H1 (cell line): ENCODE measurements at regions of chr12 and their contacts with region 1.

Region 1: GRCh38 chr12:106223485-106224354 is 24.1 kb downstream of the CKAP4 start:
- DNase-seq: peak in 1 of 2 experiments; percentile 92
- H3K4me3 ChIP-seq: no peak overlapping the region
- H3K27ac ChIP-seq: no peak overlapping the region
- H3K4me1 ChIP-seq: peaks cover 0 to 2% (median 0%) of the 10 kb centered on the region in 4 experiments; a peak in 1 of 7 replicates
- H3K27me3 ChIP-seq: no peaks in the 10 kb centered on the region
- CTCF ChIP-seq: peak; percentile 89 to 93 (median 91)
- EP300 ChIP-seq: no peak
- POLR2A ChIP-seq: no peak
- RAD21 ChIP-seq: peak; percentile 90 to 91

Region 2: GRCh38 chr12:105420659-105421240 is 803.0 kb before region 1 on chr12:
- CTCF ChIA-PET with region 1: interaction called, 11 read pairs
- POLR2A ChIA-PET with region 1: no interaction called
- DNase-seq: peak in 1 of 2 experiments; percentile 83
- H3K4me3 ChIP-seq: no peak overlapping the region
- H3K27ac ChIP-seq: no peak overlapping the region
- H3K4me1 ChIP-seq: no peaks in the 10 kb centered on the region
- H3K27me3 ChIP-seq: no peaks in the 10 kb centered on the region
- CTCF ChIP-seq: peak; percentile 51 to 90 (median 82)
- EP300 ChIP-seq: no peak
- POLR2A ChIP-seq: no peak
- RAD21 ChIP-seq: peak; percentile 100

Region 3: DNA sequence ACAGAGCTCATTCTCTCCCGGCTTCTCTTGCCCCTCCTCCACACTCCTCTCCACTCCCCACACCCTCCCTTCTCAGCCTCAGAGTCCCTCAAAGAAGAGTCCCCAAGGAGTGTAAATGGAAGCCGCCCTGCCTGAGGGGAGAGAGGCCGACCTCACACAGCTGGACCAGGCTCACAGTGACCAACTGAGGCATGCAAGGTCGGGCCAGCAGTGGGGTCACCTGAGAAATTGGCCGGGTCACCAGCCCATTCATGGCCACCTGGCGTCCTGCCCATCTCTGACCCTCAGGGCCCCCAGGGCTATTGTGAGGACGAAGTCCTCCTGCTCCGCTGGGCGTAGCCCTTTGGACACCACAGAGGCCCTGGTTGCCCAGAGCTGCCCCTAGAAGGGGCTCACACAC is 35.5 kb before region 1 on chr12:
- CTCF ChIA-PET with region 1: interaction called, 18 read pairs
- POLR2A ChIA-PET with region 1: no interaction called
- DNase-seq: no peak
- H3K4me3 ChIP-seq: no peak overlapping the region
- H3K27ac ChIP-seq: no peak overlapping the region
- H3K4me1 ChIP-seq: peaks cover 0 to 7% (median 2%) of the 10 kb centered on the region in 4 experiments; a peak in 4 of 7 replicates
- H3K27me3 ChIP-seq: no peaks in the 10 kb centered on the region
- CTCF ChIP-seq: no peak
- EP300 ChIP-seq: no peak
- POLR2A ChIP-seq: no peak
- RAD21 ChIP-seq: no peak

Region 4: DNA sequence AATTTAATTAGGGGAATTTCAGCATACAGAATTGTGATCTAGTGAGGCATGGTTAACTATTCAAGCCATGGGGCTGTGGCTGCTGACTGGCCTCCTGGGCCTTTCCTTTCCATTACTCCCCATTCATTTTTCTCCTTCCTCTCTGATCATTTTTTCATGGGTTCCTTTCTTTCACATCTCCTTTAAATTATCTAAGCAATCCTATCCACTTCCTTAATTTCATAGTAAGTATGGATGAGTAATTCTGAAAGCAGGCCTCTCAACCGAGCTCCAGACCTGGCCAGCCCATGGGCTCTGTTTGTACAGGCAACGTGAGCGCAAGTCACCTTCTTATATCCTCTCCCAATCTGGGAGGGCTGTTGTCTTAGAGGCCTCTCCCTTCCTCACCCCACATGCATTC is 10.7 kb after region 1 on chr12:
- CTCF ChIA-PET with region 1: interaction called, 21 read pairs
- POLR2A ChIA-PET with region 1: interaction called, 5 read pairs
- DNase-seq: no peak
- H3K4me3 ChIP-seq: no peak overlapping the region
- H3K27ac ChIP-seq: no peak overlapping the region
- H3K4me1 ChIP-seq: peaks cover 0 to 5% (median under 1%) of the 10 kb centered on the region in 4 experiments; a peak in 1 of 7 replicates
- H3K27me3 ChIP-seq: no peaks in the 10 kb centered on the region
- CTCF ChIP-seq: no peak
- EP300 ChIP-seq: no peak
- POLR2A ChIP-seq: no peak
- RAD21 ChIP-seq: no peak

Region 5: DNA sequence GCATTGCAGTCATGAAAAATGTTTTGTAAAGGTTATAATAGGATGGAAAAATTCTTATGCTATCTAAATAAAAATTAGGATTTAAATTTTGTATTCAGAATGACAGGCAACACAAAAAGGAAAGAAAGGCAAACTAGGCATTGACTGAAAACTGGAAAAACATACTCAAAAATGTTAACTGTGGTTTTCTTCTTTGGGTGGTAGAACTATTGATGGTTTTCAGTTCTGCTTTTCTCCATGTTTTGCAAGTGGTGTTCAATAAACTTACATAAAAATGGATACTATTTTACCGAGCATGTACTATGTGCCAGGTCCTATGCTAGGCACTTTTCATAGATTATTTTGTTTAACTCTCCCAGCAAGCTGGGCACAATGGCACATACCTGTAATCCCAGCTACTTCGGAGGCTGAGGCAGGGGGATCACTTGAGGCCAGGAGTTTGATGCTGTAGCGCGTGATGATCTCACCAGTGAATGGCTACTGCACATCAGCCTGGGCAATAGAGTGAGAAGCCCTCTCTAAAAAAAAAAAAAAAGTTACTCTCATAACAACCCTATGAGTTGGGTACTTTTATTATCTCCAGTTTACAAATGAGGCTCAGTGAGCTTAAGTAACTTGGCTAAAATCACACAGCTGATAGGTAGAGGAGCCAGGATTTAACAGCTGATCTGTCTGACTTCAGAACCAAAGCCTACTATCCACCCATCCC is 52.5 kb after region 1 on chr12:
- CTCF ChIA-PET with region 1: interaction called, 47 read pairs
- POLR2A ChIA-PET with region 1: no interaction called
- DNase-seq: no peak
- H3K4me3 ChIP-seq: no peak overlapping the region
- H3K27ac ChIP-seq: no peak overlapping the region
- H3K4me1 ChIP-seq: no peaks in the 10 kb centered on the region
- H3K27me3 ChIP-seq: no peaks in the 10 kb centered on the region
- CTCF ChIP-seq: no peak
- EP300 ChIP-seq: no peak
- POLR2A ChIP-seq: no peak
- RAD21 ChIP-seq: no peak

Region 6: DNA sequence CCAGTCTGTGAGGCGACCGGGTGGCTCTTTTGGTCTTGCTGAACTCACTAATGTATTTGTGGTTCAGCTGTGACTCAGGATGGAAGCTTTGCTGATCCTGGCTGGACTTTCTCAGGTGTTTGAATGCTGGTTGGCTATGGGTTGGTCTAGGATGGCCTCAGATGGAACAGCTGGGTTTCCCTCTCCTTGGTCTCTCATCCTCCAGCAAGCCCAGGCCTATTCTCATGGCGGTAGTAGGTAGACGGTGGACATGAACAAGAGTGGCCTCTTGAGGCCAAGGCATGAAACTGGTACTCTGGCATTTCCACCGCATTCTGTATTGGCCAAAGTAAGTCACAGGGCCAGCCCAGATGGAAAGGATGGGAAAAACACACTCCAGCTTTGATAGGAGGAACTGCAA is 122.0 kb after region 1 on chr12:
- CTCF ChIA-PET with region 1: interaction called, 18 read pairs
- POLR2A ChIA-PET with region 1: no interaction called
- DNase-seq: no peak
- H3K4me3 ChIP-seq: no peak overlapping the region
- H3K27ac ChIP-seq: no peak overlapping the region
- H3K4me1 ChIP-seq: no peaks in the 10 kb centered on the region
- H3K27me3 ChIP-seq: no peaks in the 10 kb centered on the region
- CTCF ChIP-seq: peak; percentile 57 to 79 (median 57)
- EP300 ChIP-seq: no peak
- POLR2A ChIP-seq: no peak
- RAD21 ChIP-seq: peak; percentile 73 to 77